Activated B cell treated with CpG ODN at 0.5 μM for 24 hours (primary cell): ENCODE measurements at regions of chr22 and their contacts with region 1.

Region 1: DNA sequence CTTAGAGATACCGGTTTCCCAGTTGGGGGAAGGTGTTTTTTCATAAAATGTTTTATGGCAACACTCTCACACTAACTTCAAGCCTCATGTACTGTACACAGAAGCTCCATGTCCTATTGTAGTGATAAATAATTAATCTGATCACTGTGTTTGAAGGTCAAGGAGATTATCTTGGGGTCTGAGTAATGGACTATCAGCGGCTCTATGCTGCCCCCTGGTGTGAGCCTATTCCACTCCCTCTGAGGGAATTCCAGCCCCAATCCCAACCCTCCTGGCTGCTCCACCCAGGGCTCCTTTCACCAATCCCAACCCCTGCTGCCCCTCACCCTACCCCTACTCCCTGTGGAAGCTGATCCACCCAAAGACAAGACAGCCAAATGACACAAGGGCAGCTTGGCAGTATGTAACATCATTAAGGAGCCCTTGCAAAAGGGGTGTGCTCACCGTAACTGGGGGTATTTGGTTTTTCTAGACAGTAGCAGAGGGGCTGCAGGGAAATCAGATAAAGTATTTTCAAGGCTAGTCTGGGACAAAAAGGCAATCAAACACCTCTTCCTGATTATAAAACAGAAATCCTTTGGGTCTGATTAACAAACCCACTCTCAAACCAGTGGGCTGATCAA is 22.3 kb downstream of the HPS4 start:
- DNase-seq: peak; percentile 47
- ATAC-seq: peak; percentile 57
- H3K4me3 Mint-ChIP-seq: no peak overlapping the region
- H3K27ac Mint-ChIP-seq: no peak overlapping the region
- H3K4me1 Mint-ChIP-seq: peaks cover 2% of the 10 kb centered on the region
- H3K27me3 Mint-ChIP-seq: no peaks in the 10 kb centered on the region
- CTCF ChIP-seq: peak; percentile 66

Region 2: DNA sequence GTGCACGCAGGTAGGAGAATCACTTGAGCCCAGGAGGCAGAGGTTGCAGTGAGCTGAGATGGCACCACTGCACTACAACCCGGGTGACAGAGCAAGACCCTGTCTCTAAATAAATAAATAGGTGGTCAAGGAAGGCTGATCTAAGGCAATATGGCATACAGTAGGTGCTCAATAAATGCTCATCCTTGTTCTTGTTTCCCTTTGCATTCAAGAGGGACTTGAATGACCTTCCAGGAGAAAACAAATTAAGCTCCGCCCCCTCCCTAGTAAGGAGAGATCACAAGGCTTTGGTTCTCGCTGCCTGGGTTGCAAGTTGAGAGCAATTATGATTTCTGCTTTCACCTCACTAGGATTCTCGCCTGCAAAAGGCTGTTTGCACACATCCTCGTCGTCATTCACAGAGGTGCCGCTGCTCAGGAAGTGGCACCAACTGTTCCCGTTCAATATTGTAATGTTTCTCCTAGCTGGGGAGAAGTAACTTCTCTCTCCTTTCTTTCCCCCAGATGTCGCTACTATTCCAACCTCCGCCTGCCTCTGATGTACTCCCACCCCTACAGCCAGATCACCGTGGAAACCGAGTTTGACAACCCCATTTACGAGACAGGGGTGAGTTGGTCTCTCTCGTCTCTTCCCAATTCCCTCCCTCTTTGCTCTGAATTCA is 84.0 kb before region 1 on chr22:
- CTCF ChIA-PET with region 1: interaction called, 10 read pairs
- POLR2A ChIA-PET with region 1: no interaction called
- intact Hi-C with region 1: no loop called
- DNase-seq: no peak
- ATAC-seq: no peak
- H3K4me3 Mint-ChIP-seq: no peak overlapping the region
- H3K27ac Mint-ChIP-seq: no peak overlapping the region
- H3K4me1 Mint-ChIP-seq: peaks cover 3% of the 10 kb centered on the region
- H3K27me3 Mint-ChIP-seq: peaks cover 54% of the 10 kb centered on the region
- CTCF ChIP-seq: no peak

Region 3: DNA sequence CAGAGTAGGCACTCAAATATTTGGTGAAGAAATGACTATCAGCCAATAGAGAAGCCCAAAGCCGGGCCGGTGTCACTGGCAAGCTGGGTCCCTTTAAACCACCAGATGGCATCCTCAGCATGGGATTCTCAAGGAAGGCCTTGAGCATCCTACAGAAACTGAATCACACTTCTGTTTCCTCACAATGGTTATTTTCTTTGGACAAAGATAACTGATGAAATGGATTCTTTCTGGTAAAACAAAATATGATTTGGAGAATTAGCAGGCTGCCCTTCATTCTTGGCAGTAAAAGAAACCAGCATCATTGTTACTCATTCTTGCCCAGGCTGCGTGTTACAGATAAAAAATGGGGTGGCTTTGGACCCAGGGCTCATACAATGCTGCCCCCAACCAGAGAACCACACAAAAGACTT is 62.6 kb before region 1 on chr22:
- CTCF ChIA-PET with region 1: interaction called, 138 read pairs
- POLR2A ChIA-PET with region 1: no interaction called
- intact Hi-C with region 1: loop called (anchors 1 kb)
- DNase-seq: peak; percentile 21
- ATAC-seq: peak; percentile 77
- H3K4me3 Mint-ChIP-seq: no peak overlapping the region
- H3K27ac Mint-ChIP-seq: no peak overlapping the region
- H3K4me1 Mint-ChIP-seq: peaks cover 5% of the 10 kb centered on the region
- H3K27me3 Mint-ChIP-seq: peaks cover 11% of the 10 kb centered on the region
- CTCF ChIP-seq: peak; percentile 47